Activated naive CD4-positive, alpha-beta T cell treated with anti-CD3 and anti-CD28 coated beads, Interleukin-2, amount 10 ng/mL, durations not matched to agents 7 days and 5 days (primary cell): ENCODE measurements at regions of chr6 and their contacts with region 1.

Region 1: DNA sequence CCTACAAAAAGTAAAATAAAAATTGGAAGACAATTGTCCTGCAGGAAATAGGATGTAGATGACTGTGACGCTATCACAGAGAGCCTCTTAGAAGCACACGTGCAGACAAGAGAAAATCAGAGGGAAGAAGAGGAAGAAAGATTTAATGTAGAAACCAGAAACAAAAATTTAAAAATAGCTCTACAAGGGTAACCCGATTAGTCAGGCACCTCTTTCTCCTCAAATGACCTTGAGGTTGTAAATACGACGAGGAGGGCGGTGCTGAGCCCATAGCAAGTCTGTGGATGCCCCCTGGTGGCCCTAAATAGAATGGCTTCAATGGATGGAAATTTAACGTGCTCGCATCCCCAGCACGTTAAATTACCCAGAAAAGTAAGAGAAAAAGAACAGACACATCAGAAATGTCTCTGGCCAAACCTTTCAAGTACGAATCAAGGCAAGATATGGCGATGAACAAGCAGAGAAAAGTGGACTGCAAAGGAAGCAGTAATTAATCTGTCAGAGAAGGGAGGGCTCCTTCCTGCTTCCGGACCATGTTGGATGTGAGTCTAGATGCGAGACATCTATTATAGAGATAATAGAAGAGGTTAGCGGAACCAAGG is 4.2 kb upstream of the PRPH2 start:
- DNase-seq: peak; percentile 79
- H3K4me3 Mint-ChIP-seq: peak overlapping the region; percentile 79
- H3K27ac Mint-ChIP-seq: peak overlapping the region; percentile 95
- H3K4me1 Mint-ChIP-seq: peaks cover 22% of the 10 kb centered on the region
- H3K27me3 Mint-ChIP-seq: peaks cover 17% of the 10 kb centered on the region

Region 2: GRCh38 chr6:42661540-42662153 is 64.9 kb before region 1 on chr6:
- CTCF ChIA-PET with region 1: interaction called, 55 read pairs
- DNase-seq: peak; percentile 88
- H3K4me3 Mint-ChIP-seq: no peak overlapping the region
- H3K27ac Mint-ChIP-seq: no peak overlapping the region
- H3K4me1 Mint-ChIP-seq: no peaks in the 10 kb centered on the region
- H3K27me3 Mint-ChIP-seq: no peaks in the 10 kb centered on the region

Region 3: DNA sequence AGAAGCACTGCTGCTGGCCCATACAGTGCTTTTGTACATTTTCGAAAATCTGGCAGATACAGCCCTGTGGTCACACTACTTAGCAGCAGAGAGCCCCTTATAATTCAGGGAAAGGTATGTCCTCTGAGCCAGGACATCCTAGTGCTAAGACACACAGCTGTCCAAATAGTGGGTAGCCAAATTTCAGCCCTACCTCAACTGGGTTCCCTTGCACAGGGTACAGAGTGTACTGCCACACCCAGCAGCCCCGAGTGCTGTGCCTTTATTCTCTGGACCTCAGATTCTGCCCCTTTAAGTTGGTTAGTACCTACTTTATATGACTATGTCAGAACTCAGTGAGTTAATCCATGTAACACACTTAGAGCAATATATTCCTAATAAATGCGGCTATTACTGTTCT is 51.8 kb before region 1 on chr6:
- CTCF ChIA-PET with region 1: interaction called, 10 read pairs
- DNase-seq: no peak
- H3K4me3 Mint-ChIP-seq: no peak overlapping the region
- H3K27ac Mint-ChIP-seq: no peak overlapping the region
- H3K4me1 Mint-ChIP-seq: no peaks in the 10 kb centered on the region
- H3K27me3 Mint-ChIP-seq: no peaks in the 10 kb centered on the region

Region 4: GRCh38 chr6:42692137-42692911 is 34.3 kb before region 1 on chr6:
- CTCF ChIA-PET with region 1: interaction called, 16 read pairs
- DNase-seq: no peak
- H3K4me3 Mint-ChIP-seq: no peak overlapping the region
- H3K27ac Mint-ChIP-seq: peak overlapping the region; percentile 22
- H3K4me1 Mint-ChIP-seq: peaks cover 50% of the 10 kb centered on the region
- H3K27me3 Mint-ChIP-seq: no peaks in the 10 kb centered on the region

Region 5: DNA sequence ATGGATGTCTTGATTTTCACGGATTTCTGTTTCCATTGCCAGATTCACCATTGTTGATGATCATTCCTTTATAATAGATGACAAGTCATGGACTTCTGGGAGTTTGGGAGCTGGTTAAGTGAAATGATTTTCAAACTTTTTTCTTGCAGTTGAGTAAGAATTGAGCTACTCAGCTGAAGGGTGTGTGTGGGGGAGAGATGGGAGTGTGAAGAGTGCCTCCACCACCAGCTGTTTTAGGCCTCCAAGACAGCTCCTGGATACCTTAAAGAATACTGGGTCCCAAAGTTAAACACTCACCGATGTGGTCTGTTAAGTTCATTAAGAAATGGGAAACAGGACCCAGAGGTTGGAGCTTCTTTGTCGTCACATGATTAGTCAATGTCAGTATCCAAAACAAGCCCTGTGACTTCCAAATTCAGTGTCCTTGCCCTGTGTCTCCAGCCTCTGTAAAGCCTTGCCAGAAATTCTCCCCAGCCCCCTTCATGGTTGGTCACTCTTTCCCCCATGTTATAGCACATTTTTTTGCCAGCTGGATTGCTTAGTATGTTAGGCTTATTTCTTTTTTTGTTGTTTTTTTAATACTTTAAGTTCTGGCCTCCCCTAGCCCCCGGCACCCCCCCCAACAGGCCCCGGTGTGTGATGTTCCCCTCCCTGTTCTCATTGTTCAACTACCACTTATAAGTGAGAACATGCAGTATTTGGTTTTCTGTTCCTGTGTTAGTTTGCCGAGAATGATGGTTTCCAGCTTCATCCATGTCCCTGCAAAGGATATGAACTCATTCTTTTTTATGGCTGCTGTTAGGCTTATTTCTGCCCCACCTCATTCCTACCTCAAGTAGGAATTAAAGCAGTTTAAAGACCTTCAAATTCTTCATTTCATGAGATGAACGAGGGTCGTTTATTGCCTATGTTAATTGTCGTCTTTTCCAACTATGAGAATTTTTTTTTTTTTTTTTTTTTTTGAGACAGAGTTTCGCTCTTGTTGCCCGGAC is 82.2 kb after region 1 on chr6:
- CTCF ChIA-PET with region 1: no interaction called
- DNase-seq: no peak
- H3K4me3 Mint-ChIP-seq: no peak overlapping the region
- H3K27ac Mint-ChIP-seq: no peak overlapping the region
- H3K4me1 Mint-ChIP-seq: no peaks in the 10 kb centered on the region
- H3K27me3 Mint-ChIP-seq: no peaks in the 10 kb centered on the region

Region 6: GRCh38 chr6:42879372-42880239 is 153.0 kb after region 1 on chr6 and contains the start of gene RPL7L1:
- CTCF ChIA-PET with region 1: interaction called, 11 read pairs
- DNase-seq: peak; percentile 88
- H3K4me3 Mint-ChIP-seq: peak within 1 kb of the TSS; percentile 90
- H3K27ac Mint-ChIP-seq: peak within 1 kb of the TSS; percentile 95
- H3K4me1 Mint-ChIP-seq: peaks cover 42% of the 10 kb centered on the region
- H3K27me3 Mint-ChIP-seq: no peaks in the 10 kb centered on the region

Region 7: GRCh38 chr6:42933205-42933604 is 206.6 kb after region 1 on chr6:
- CTCF ChIA-PET with region 1: no interaction called
- DNase-seq: no peak
- H3K4me3 Mint-ChIP-seq: no peak overlapping the region
- H3K27ac Mint-ChIP-seq: no peak overlapping the region
- H3K4me1 Mint-ChIP-seq: peaks cover 38% of the 10 kb centered on the region
- H3K27me3 Mint-ChIP-seq: no peaks in the 10 kb centered on the region